Heart left ventricle (tissue), 16 donors: ENCODE measurements at regions of chr6 and their contacts with region 1.

Region 1: GRCh38 chr6:151044465-151045441 is 179.3 kb downstream of the MTHFD1L start:
- DNase-seq: peak in 4 of 5 donors; percentile 57 to 80 (median 71)
- ATAC-seq: peak in 1 of 4 donors; percentile 62
- H3K4me3 ChIP-seq: peak overlapping the region in 9 of 12 donors; percentile 0 to 43 (median 8)
- H3K27ac ChIP-seq: peak overlapping the region; percentile 59 to 81 (median 73)
- H3K4me1 ChIP-seq: peaks cover 0 to 39% (median 20%) of the 10 kb centered on the region in 12 donors
- H3K27me3 ChIP-seq: no peaks in the 10 kb centered on the region
- CTCF ChIP-seq: no peak
- POLR2A ChIP-seq: no peak

Region 2: DNA sequence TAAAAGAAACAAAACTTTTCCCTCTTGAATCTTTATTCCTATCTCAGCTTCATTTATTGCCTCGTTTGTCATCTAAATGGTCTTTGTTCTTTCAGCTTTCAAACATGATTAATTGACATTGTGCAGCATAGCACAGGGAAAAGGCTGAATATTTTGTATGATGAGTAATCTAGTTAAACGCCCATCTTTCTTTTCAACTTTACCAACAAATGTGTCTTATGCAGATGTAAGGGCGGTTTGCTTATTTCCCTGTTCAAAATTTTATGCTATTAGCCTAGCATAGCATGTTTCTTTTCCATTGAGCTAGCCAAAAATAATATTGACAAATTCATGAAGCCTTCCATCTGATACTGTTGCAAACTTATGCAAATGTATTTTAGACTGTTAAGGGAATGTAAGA is 18.6 kb after region 1 on chr6:
- intact Hi-C with region 1: loop called in 1 of 10 experiments (anchors 2 kb)
- DNase-seq: no peak
- ATAC-seq: no peak
- H3K4me3 ChIP-seq: no peak overlapping the region
- H3K27ac ChIP-seq: peak overlapping the region in 3 of 12 donors; percentile 13 to 27 (median 22)
- H3K4me1 ChIP-seq: peaks cover 0 to 37% (median 13%) of the 10 kb centered on the region in 12 donors
- H3K27me3 ChIP-seq: no peaks in the 10 kb centered on the region
- CTCF ChIP-seq: no peak
- POLR2A ChIP-seq: no peak

Region 3: GRCh38 chr6:151130329-151130728 is 85.6 kb after region 1 on chr6:
- intact Hi-C with region 1: no loop called
- DNase-seq: no peak
- ATAC-seq: no peak
- H3K4me3 ChIP-seq: no peak overlapping the region
- H3K27ac ChIP-seq: no peak overlapping the region
- H3K4me1 ChIP-seq: no peaks in the 10 kb centered on the region
- H3K27me3 ChIP-seq: no peaks in the 10 kb centered on the region
- CTCF ChIP-seq: no peak
- POLR2A ChIP-seq: no peak